ENCODE measurements at regions of chr1 and their contacts with region 1.

Region 1: DNA sequence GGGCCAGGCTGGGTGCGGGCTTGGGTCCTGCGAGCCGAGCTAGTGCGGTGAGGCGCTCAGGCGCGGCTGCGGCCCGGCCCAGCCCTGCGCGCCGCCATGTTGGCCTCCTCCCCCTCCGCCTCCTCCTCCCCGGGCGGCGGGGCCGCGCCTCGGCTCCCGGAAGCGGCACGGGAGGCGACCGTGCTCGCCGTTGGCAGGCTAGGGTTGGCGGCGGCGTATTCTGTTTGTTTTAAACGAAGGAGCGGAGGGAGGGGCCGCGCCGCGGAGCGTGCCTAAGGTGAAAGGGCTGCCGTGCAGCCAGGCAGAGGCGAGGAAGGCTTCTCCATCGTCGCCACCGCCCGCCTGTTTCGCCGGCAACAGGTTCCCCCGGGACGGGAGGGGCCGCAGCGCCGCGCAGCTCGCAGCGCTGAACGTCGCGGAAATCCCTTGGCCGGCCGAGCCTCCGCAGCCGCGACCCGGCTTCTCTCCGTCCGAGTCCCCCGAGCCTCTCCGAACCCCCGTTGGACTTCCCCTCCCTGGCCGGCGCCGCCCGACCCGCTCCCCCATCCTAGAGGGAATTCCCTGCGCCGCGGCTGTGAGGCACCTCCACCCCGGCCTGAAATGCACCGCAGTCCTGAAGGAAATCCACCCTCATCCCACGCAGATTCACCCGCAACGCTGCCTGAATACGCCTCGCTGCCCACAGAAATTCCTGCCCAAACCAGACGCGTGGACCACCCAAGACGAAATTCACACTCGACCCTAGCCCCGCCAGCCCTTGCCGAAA is at the start of gene USP24:
- DNase-seq: peak; percentile 81 to 90 (median 85)
- ATAC-seq: peak; percentile 83
- H3K4me3 ChIP-seq: peak within 1 kb of the TSS; percentile 80
- H3K27ac ChIP-seq: peak within 1 kb of the TSS; percentile 94
- H3K4me1 ChIP-seq: peaks cover 15 to 31% of the 10 kb centered on the region in 2 experiments
- H3K27me3 ChIP-seq: no peaks in the 10 kb centered on the region
- CTCF ChIP-seq: no peak
- EP300 ChIP-seq: 0 out of 2 replicates have a peak, but pooled peaks have one; percentile 16
- POLR2A ChIP-seq: peak; percentile 89
- RAD21 ChIP-seq: 0 out of 4 replicates have a peak, but pooled peaks of 1 of the 2 experiments have one; percentile 13
- polyA plus RNA-seq, gene USP24: 7.7 to 14.1 TPM

Region 2: DNA sequence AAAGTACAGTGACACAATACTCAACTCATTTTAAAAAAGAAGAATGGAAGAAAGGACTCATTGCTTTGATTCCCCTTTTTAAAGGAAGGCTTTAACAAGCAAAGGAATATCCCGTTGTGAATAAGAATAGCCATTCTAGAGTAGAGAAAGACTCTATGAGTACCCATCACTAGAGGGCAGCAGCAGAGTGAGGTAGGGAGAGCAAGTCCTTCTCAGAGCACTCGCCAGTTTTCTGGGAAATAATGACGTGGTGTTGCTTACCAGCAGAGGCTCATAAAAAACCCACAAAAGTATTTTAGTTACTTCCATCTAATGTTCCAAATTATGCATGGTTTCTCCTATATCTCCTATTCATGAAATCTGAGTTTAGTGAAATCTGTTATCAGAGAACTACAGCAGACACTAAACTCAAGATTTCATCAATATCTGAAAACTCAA is 74.9 kb before region 1 on chr1:
- CTCF ChIA-PET with region 1: no interaction called
- POLR2A ChIA-PET with region 1: no interaction called
- in situ Hi-C with region 1: no loop called
- intact Hi-C with region 1: loop called (anchors 2 kb)
- DNase-seq: peak; percentile 73 to 89 (median 77)
- ATAC-seq: peak; percentile 98
- H3K4me3 ChIP-seq: no peak overlapping the region
- H3K27ac ChIP-seq: no peak overlapping the region; the same call in 2 of the 3 replicates
- H3K4me1 ChIP-seq: peaks cover 0 to 6% of the 10 kb centered on the region in 2 experiments; a peak in 2 of 5 replicates
- H3K27me3 ChIP-seq: no peaks in the 10 kb centered on the region
- CTCF ChIP-seq: peak; percentile 80 to 91 (median 85)
- EP300 ChIP-seq: peak; percentile 48; the same call in 1 of the 2 replicates
- POLR2A ChIP-seq: no peak
- RAD21 ChIP-seq: peak; percentile 92 to 98

Region 3: DNA sequence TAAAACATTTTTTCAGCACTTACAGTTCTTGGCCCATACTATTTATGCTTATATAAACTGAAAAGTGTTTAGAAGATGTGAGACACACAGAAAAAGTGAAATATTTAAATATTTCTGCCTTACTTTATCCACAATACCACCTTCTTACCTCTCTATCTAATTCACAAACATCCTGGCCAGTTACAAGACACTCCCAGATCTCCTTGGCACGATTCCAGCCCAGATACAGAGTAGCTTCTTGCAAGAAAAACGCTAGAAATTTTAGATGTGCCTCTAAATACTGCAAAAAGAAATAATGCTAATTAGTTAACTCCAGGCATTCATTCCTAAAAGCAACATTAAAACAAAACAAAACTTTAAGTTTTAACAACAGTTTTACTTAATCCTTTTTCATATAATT is 68.7 kb before region 1 on chr1:
- CTCF ChIA-PET with region 1: no interaction called
- POLR2A ChIA-PET with region 1: interaction called, 4 read pairs
- in situ Hi-C with region 1: no loop called
- intact Hi-C with region 1: loop called (anchors 2 kb)
- DNase-seq: peak; percentile 25 to 84 (median 44)
- ATAC-seq: peak; percentile 57
- H3K4me3 ChIP-seq: no peak overlapping the region
- H3K27ac ChIP-seq: no peak overlapping the region
- H3K4me1 ChIP-seq: peaks cover 0 to 3% of the 10 kb centered on the region in 2 experiments; a peak in 1 of 5 replicates
- H3K27me3 ChIP-seq: no peaks in the 10 kb centered on the region
- CTCF ChIP-seq: no peak
- EP300 ChIP-seq: no peak
- POLR2A ChIP-seq: no peak
- RAD21 ChIP-seq: no peak

Region 4: GRCh38 chr1:55179177-55179835 is 36.1 kb before region 1 on chr1:
- CTCF ChIA-PET with region 1: no interaction called
- POLR2A ChIA-PET with region 1: interaction called, 5 read pairs
- in situ Hi-C with region 1: no loop called
- intact Hi-C with region 1: loop called (anchors 5 kb)
- DNase-seq: peak; percentile 52 to 82 (median 64)
- ATAC-seq: peak; percentile 92
- H3K4me3 ChIP-seq: no peak overlapping the region
- H3K27ac ChIP-seq: peak overlapping the region; percentile 40
- H3K4me1 ChIP-seq: peaks cover 11 to 24% of the 10 kb centered on the region in 2 experiments
- H3K27me3 ChIP-seq: no peaks in the 10 kb centered on the region
- CTCF ChIP-seq: no peak
- EP300 ChIP-seq: peak; percentile 72
- POLR2A ChIP-seq: no peak
- RAD21 ChIP-seq: no peak

Region 5: GRCh38 chr1:55195521-55196233 is 19.8 kb before region 1 on chr1:
- CTCF ChIA-PET with region 1: no interaction called
- POLR2A ChIA-PET with region 1: interaction called, 11 read pairs
- in situ Hi-C with region 1: no loop called
- intact Hi-C with region 1: no loop called
- DNase-seq: no peak
- ATAC-seq: peak; percentile 24; the same call in 2 of the 3 replicates
- H3K4me3 ChIP-seq: no peak overlapping the region
- H3K27ac ChIP-seq: peak overlapping the region; percentile 75
- H3K4me1 ChIP-seq: peaks cover 19 to 73% of the 10 kb centered on the region in 2 experiments
- H3K27me3 ChIP-seq: no peaks in the 10 kb centered on the region
- CTCF ChIP-seq: no peak
- EP300 ChIP-seq: no peak
- POLR2A ChIP-seq: no peak
- RAD21 ChIP-seq: no peak

Region 6: GRCh38 chr1:55204997-55205396 is 10.4 kb before region 1 on chr1:
- CTCF ChIA-PET with region 1: no interaction called
- POLR2A ChIA-PET with region 1: interaction called, 23 read pairs
- in situ Hi-C with region 1: no loop called
- intact Hi-C with region 1: no loop called
- DNase-seq: peak in 3 of 4 experiments; percentile 33 to 65 (median 57)
- ATAC-seq: peak; percentile 71
- H3K4me3 ChIP-seq: no peak overlapping the region
- H3K27ac ChIP-seq: peak overlapping the region; percentile 44
- H3K4me1 ChIP-seq: peaks cover 7 to 44% of the 10 kb centered on the region in 2 experiments
- H3K27me3 ChIP-seq: no peaks in the 10 kb centered on the region
- CTCF ChIP-seq: no peak
- EP300 ChIP-seq: no peak
- POLR2A ChIP-seq: no peak
- RAD21 ChIP-seq: no peak

Region 7: GRCh38 chr1:55277377-55278130 is 62.1 kb after region 1 on chr1:
- CTCF ChIA-PET with region 1: no interaction called
- POLR2A ChIA-PET with region 1: interaction called, 5 read pairs
- in situ Hi-C with region 1: no loop called
- intact Hi-C with region 1: loop called (anchors 2 kb)
- DNase-seq: peak; percentile 80 to 91 (median 82)
- ATAC-seq: peak; percentile 90
- H3K4me3 ChIP-seq: no peak overlapping the region
- H3K27ac ChIP-seq: peak overlapping the region; percentile 79; the same call in 2 of the 3 replicates
- H3K4me1 ChIP-seq: peaks cover 19 to 33% of the 10 kb centered on the region in 2 experiments
- H3K27me3 ChIP-seq: no peaks in the 10 kb centered on the region
- CTCF ChIP-seq: peak; percentile 86 to 93 (median 88)
- EP300 ChIP-seq: peak; percentile 1; the same call in 1 of the 2 replicates
- POLR2A ChIP-seq: no peak
- RAD21 ChIP-seq: peak; percentile 87 to 96

Region 8: GRCh38 chr1:55718758-55719671 is 503.6 kb after region 1 on chr1:
- CTCF ChIA-PET with region 1: no interaction called
- POLR2A ChIA-PET with region 1: no interaction called
- in situ Hi-C with region 1: no loop called
- intact Hi-C with region 1: no loop called
- DNase-seq: no peak
- ATAC-seq: no peak
- H3K4me3 ChIP-seq: no peak overlapping the region
- H3K27ac ChIP-seq: no peak overlapping the region
- H3K4me1 ChIP-seq: no peaks in the 10 kb centered on the region
- H3K27me3 ChIP-seq: no peaks in the 10 kb centered on the region
- CTCF ChIP-seq: no peak
- EP300 ChIP-seq: no peak
- POLR2A ChIP-seq: no peak
- RAD21 ChIP-seq: no peak

Region 9: GRCh38 chr1:55860798-55861519 is 645.5 kb after region 1 on chr1:
- CTCF ChIA-PET with region 1: no interaction called
- POLR2A ChIA-PET with region 1: no interaction called
- in situ Hi-C with region 1: no loop called
- intact Hi-C with region 1: no loop called
- DNase-seq: no peak
- ATAC-seq: no peak
- H3K4me3 ChIP-seq: no peak overlapping the region
- H3K27ac ChIP-seq: no peak overlapping the region
- H3K4me1 ChIP-seq: no peaks in the 10 kb centered on the region
- H3K27me3 ChIP-seq: no peaks in the 10 kb centered on the region
- CTCF ChIP-seq: no peak
- EP300 ChIP-seq: no peak
- POLR2A ChIP-seq: no peak
- RAD21 ChIP-seq: no peak

Measured in K562 (cell line).